HepG2 (cell line): ENCODE measurements at regions of chr9 and their contacts with region 1.

Region 1: DNA sequence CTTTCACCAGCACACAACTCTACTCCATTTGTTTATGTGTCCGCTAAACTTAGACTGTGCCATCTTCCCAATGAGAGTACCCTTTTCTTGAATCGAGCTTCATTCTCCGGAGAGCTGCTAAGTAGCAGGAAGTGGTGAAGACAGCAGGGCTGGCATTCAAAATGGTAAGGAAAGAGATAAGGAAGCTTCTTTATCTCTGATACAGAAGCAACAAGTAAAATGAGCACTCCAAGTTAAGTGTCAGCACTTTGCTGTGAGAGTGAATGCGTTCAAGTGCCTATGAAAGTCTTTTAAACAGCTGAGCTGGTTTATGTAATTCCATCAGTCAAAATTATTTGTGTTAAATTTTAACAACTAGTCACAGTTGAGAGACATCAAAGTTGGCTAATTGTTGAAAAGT is 386.8 kb upstream of the PTPRD start:
- DNase-seq: no peak
- ATAC-seq: no peak
- H3K4me3 ChIP-seq: no peak overlapping the region
- H3K27ac ChIP-seq: no peak overlapping the region
- H3K4me1 ChIP-seq: no peaks in the 10 kb centered on the region
- H3K27me3 ChIP-seq: no peaks in the 10 kb centered on the region
- CTCF ChIP-seq: no peak
- EP300 ChIP-seq: no peak
- POLR2A ChIP-seq: no peak
- RAD21 ChIP-seq: no peak

Region 2: GRCh38 chr9:10649076-10649475 is 350.6 kb before region 1 on chr9:
- CTCF ChIA-PET with region 1: no interaction called
- POLR2A ChIA-PET with region 1: no interaction called
- in situ Hi-C with region 1: no loop called
- intact Hi-C with region 1: no loop called
- DNase-seq: no peak
- ATAC-seq: no peak
- H3K4me3 ChIP-seq: no peak overlapping the region
- H3K27ac ChIP-seq: no peak overlapping the region
- H3K4me1 ChIP-seq: no peaks in the 10 kb centered on the region
- H3K27me3 ChIP-seq: no peaks in the 10 kb centered on the region
- CTCF ChIP-seq: no peak
- EP300 ChIP-seq: no peak
- POLR2A ChIP-seq: no peak
- RAD21 ChIP-seq: no peak

Region 3: GRCh38 chr9:12566404-12567090 is 1566.9 kb after region 1 on chr9:
- CTCF ChIA-PET with region 1: no interaction called
- POLR2A ChIA-PET with region 1: no interaction called
- in situ Hi-C with region 1: no loop called
- intact Hi-C with region 1: loop called (anchors 10 kb)
- DNase-seq: no peak
- ATAC-seq: no peak
- H3K4me3 ChIP-seq: no peak overlapping the region
- H3K27ac ChIP-seq: no peak overlapping the region
- H3K4me1 ChIP-seq: no peaks in the 10 kb centered on the region
- H3K27me3 ChIP-seq: no peaks in the 10 kb centered on the region
- CTCF ChIP-seq: no peak
- EP300 ChIP-seq: no peak
- POLR2A ChIP-seq: no peak
- RAD21 ChIP-seq: no peak